ENCODE measurements at regions of chr1 and their contacts with region 1.

Region 1: GRCh38 chr1:241531195-241532161 is 700 bp upstream of the KMO start:
- DNase-seq: no peak
- H3K4me3 Mint-ChIP-seq: peak overlapping the region; percentile 84
- H3K27ac Mint-ChIP-seq: peak overlapping the region; percentile 85
- H3K4me1 Mint-ChIP-seq: peaks cover 20% of the 10 kb centered on the region
- H3K27me3 Mint-ChIP-seq: no peaks in the 10 kb centered on the region

Region 2: GRCh38 chr1:241485554-241485992 is 45.9 kb before region 1 on chr1:
- CTCF ChIA-PET with region 1: no interaction called
- POLR2A ChIA-PET with region 1: no interaction called
- intact Hi-C with region 1: no loop called
- DNase-seq: no peak
- H3K4me3 Mint-ChIP-seq: no peak overlapping the region
- H3K27ac Mint-ChIP-seq: no peak overlapping the region
- H3K4me1 Mint-ChIP-seq: peaks cover 4% of the 10 kb centered on the region
- H3K27me3 Mint-ChIP-seq: peaks cover 6% of the 10 kb centered on the region

Region 3: GRCh38 chr1:241519308-241520079 is 12.0 kb before region 1 on chr1 and contains the start of gene FH:
- CTCF ChIA-PET with region 1: no interaction called
- POLR2A ChIA-PET with region 1: no interaction called
- intact Hi-C with region 1: loop called (anchors 1 kb)
- DNase-seq: peak; percentile 96
- H3K4me3 Mint-ChIP-seq: peak within 1 kb of the TSS; percentile 87
- H3K27ac Mint-ChIP-seq: peak within 1 kb of the TSS; percentile 53
- H3K4me1 Mint-ChIP-seq: peaks cover 23% of the 10 kb centered on the region
- H3K27me3 Mint-ChIP-seq: peaks cover 21% of the 10 kb centered on the region
- total RNA-seq, gene FH: 85.7 to 89.1 TPM

Region 4: GRCh38 chr1:241592273-241592958 is 60.9 kb after region 1 on chr1:
- CTCF ChIA-PET with region 1: interaction called, 4 read pairs
- POLR2A ChIA-PET with region 1: no interaction called
- intact Hi-C with region 1: loop called (anchors 1 kb)
- DNase-seq: no peak
- H3K4me3 Mint-ChIP-seq: no peak overlapping the region
- H3K27ac Mint-ChIP-seq: peak overlapping the region; percentile 49
- H3K4me1 Mint-ChIP-seq: peaks cover 27% of the 10 kb centered on the region
- H3K27me3 Mint-ChIP-seq: no peaks in the 10 kb centered on the region

Region 5: DNA sequence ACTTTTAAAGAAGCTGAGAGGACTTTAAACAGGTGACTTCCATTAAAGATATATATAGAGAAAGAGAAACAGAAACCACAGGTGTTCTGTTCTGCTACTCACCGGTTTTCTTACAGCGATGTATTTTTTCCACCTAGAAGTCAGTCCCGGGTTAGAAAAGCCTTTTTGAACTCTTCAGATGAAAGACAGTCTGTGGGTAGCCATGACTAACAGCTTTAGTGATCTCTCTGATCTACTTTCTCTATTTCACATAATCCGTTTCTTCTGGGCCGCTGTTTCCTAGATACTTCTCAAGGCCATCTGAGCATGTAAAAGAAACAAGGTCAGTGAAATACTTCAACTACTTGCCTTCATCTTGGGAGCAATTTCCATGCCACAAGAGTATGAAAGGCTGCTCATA is 145.7 kb after region 1 on chr1:
- CTCF ChIA-PET with region 1: no interaction called
- POLR2A ChIA-PET with region 1: no interaction called
- intact Hi-C with region 1: loop called (anchors 1 kb)
- DNase-seq: no peak
- H3K4me3 Mint-ChIP-seq: no peak overlapping the region
- H3K27ac Mint-ChIP-seq: no peak overlapping the region
- H3K4me1 Mint-ChIP-seq: peaks cover 15% of the 10 kb centered on the region
- H3K27me3 Mint-ChIP-seq: peaks cover 2% of the 10 kb centered on the region

Region 6: GRCh38 chr1:241810769-241811405 is 279.4 kb after region 1 on chr1:
- CTCF ChIA-PET with region 1: no interaction called
- POLR2A ChIA-PET with region 1: no interaction called
- intact Hi-C with region 1: no loop called
- DNase-seq: no peak
- H3K4me3 Mint-ChIP-seq: no peak overlapping the region
- H3K27ac Mint-ChIP-seq: no peak overlapping the region
- H3K4me1 Mint-ChIP-seq: no peaks in the 10 kb centered on the region
- H3K27me3 Mint-ChIP-seq: peaks cover 1% of the 10 kb centered on the region

Region 7: DNA sequence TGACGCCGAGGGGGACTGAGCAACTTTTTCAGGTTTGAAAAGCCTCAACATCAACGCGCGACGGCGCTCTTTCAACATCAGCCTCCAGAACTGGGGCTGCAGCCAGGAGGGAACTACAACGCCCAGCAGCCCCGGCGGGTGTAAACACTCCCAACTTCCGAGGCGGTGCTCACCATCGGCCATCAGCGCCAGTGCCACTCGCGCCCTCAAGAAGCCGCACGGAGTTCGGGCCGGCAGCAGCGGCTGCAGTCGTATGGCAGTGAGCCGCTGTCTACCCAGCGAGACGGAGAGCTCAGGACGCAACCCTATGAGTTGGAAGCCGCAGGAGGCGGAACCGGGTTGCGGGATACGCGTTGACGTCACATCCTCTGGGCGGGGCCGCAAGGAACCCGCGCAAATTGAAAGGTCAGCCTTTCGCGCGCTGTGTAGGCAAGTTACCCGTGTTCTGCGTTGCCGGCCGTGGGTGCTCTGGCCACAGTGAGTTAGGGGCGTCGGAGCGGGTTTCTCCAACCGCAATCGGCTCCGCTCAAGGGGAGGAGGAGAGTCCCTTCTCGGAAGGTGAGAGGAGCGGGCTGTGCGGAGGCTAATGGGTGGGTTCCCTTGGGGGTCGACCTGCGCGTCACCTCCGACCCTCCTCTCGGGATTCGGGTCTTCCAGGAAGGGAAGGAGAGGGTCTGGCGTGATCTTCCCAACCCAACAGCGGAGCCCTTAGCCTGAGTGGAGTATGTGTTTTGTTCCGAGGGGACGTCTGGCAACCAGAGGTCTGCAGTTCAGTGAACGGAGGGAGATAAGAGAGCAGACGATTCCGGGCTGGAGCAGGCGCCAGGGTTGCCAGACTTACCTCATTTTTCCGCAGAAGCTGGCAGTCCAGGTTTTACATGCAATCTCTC is 316.6 kb after region 1 on chr1 and contains the start of gene EXO1:
- CTCF ChIA-PET with region 1: interaction called, 3 read pairs
- POLR2A ChIA-PET with region 1: no interaction called
- intact Hi-C with region 1: loop called (anchors 1 kb)
- DNase-seq: peak; percentile 93
- H3K4me3 Mint-ChIP-seq: peak within 1 kb of the TSS; percentile 91
- H3K27ac Mint-ChIP-seq: peak within 1 kb of the TSS; percentile 99
- H3K4me1 Mint-ChIP-seq: peaks cover 22% of the 10 kb centered on the region
- H3K27me3 Mint-ChIP-seq: no peaks in the 10 kb centered on the region
- total RNA-seq, gene EXO1: 44.3 to 50.0 TPM

Region 8: GRCh38 chr1:242017584-242018233 is 486.2 kb after region 1 on chr1:
- CTCF ChIA-PET with region 1: no interaction called
- POLR2A ChIA-PET with region 1: no interaction called
- intact Hi-C with region 1: loop called (anchors 1 kb)
- DNase-seq: peak; percentile 50
- H3K4me3 Mint-ChIP-seq: no peak overlapping the region
- H3K27ac Mint-ChIP-seq: no peak overlapping the region
- H3K4me1 Mint-ChIP-seq: no peaks in the 10 kb centered on the region
- H3K27me3 Mint-ChIP-seq: no peaks in the 10 kb centered on the region

Measured in activated CD4-positive, alpha-beta memory T cell treated with anti-CD3 and anti-CD28 coated beads for 36 hours (primary cell).